Ascending aorta (tissue), 2 donors: ENCODE measurements at regions of chr12 and their contacts with region 1.

Region 1: GRCh38 chr12:9049520-9050133 is 60.3 kb downstream of the KLRG1 start:
- DNase-seq: no peak
- H3K4me3 ChIP-seq: no peak overlapping the region
- H3K27ac ChIP-seq: no peak overlapping the region
- H3K4me1 ChIP-seq: no peaks in the 10 kb centered on the region
- H3K27me3 ChIP-seq: no peaks in the 10 kb centered on the region
- CTCF ChIP-seq: peak; percentile 25 to 58 (median 53)

Region 2: GRCh38 chr12:8544295-8544694 is 505.3 kb before region 1 on chr12:
- intact Hi-C with region 1: loop called (anchors 5 kb)
- DNase-seq: peak in 1 of 2 donors; percentile 74
- H3K4me3 ChIP-seq: no peak overlapping the region
- H3K27ac ChIP-seq: no peak overlapping the region
- H3K4me1 ChIP-seq: no peaks in the 10 kb centered on the region
- H3K27me3 ChIP-seq: no peaks in the 10 kb centered on the region
- CTCF ChIP-seq: peak; percentile 68 to 97 (median 86)

Region 3: DNA sequence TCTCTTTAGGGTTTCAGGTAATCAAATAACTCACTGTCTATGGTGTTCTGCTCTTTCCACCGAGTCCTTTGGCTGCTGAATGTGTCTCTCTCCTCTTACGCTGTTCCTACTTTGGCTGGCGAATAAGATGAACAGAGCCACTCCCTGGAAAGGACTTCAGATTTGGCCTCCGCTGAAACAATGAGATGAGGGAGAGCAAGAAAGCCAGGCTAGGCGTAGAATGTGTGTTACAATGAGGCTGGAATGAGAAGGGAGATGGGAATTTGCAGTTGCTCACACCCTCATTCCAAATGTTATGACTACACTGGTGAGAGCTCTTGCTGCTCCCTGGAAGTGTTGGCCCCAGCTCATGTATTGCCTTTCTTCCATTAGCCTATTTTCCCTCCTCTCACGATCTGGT is 387.0 kb before region 1 on chr12 and contains the start of gene MFAP5:
- intact Hi-C with region 1: loop called (anchors 10 kb)
- DNase-seq: no peak
- H3K4me3 ChIP-seq: no peak within 1 kb of the TSS
- H3K27ac ChIP-seq: peak within 1 kb of the TSS in 1 of 2 donors; percentile 43
- H3K4me1 ChIP-seq: no peaks in the 10 kb centered on the region
- H3K27me3 ChIP-seq: no peaks in the 10 kb centered on the region
- CTCF ChIP-seq: no peak
- total RNA-seq, gene MFAP5: 174 TPM

Region 4: DNA sequence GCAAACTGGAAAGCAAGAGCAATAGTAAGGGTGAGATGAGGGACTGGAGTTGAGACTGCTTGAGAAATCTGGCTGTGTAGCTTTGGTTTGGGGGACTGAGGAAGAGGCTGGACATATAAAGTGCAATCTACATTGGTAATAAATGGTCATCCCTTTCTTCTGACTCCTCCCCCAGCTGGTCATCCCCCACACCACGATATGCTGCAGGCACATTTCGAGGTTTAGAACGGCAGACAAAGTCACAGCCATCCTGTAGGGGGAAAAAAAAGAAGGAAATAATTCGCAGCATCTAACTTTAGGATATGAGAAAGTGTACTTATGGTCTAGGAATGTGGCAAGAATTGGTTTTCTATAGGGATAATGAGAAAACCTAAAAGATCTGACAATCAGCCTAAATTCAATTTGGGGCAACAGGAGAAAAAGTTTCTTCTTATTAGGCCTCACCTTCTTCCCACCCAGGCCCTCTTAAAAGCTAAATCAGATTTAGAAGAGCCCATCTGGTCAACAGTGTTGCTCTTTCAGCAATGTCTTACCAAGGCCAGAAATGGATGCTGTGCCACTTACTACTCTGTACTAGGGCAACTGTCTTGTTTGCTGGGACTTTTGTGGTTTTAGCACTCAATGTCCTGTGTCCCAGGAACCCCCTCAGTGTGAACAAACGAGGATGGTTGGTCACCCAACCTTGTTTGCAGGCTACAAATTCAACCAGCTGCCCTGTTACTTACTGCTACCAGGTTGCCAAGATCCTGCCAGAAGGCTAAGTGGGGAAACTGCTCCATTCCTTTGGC is 107.7 kb before region 1 on chr12:
- intact Hi-C with region 1: no loop called
- DNase-seq: no peak
- H3K4me3 ChIP-seq: no peak overlapping the region
- H3K27ac ChIP-seq: no peak overlapping the region
- H3K4me1 ChIP-seq: no peaks in the 10 kb centered on the region
- H3K27me3 ChIP-seq: no peaks in the 10 kb centered on the region
- CTCF ChIP-seq: no peak

Region 5: GRCh38 chr12:9032202-9033178 is 17.1 kb before region 1 on chr12:
- intact Hi-C with region 1: no loop called
- DNase-seq: no peak
- H3K4me3 ChIP-seq: no peak overlapping the region
- H3K27ac ChIP-seq: no peak overlapping the region
- H3K4me1 ChIP-seq: no peaks in the 10 kb centered on the region
- H3K27me3 ChIP-seq: no peaks in the 10 kb centered on the region
- CTCF ChIP-seq: no peak